GM12878 (cell line): ENCODE measurements at regions of chr15 and their contacts with region 1.

Region 1: DNA sequence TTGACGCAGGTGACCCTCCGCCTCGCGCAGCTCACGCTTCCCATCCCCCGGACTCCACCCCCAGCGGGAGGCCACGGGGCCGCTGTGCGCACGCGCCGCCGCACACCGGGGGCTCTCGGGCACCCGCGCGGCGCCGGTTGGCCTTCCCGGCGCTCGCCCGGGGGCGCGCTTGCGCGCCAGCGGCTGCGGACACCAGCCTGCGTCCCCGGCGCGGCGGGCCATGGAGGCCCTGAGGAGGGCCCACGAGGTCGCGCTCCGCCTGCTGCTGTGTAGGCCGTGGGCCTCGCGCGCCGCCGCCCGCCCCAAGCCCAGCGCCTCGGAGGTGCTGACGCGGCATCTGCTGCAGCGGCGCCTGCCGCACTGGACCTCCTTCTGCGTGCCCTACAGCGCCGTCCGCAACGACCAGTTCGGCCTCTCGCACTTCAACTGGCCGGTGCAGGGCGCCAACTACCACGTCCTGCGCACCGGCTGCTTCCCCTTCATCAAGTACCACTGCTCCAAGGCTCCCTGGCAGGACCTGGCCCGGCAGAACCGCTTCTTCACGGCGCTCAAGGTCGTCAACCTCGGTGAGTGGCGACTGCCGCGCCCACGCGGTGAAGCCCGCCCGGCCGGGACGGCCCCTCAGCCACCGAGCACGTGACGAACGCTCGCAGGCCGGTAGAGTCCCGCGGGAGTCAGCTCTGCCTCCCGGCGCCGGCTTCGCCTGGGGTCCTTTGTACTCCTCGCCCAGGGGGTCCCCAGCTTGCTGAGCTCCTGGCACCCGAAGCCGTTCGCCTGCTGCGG is at the start of gene C15orf61:
- DNase-seq: peak; percentile 76
- ATAC-seq: peak; percentile 84
- H3K4me3 ChIP-seq: peak within 1 kb of the TSS; percentile 93
- H3K27ac ChIP-seq: peak within 1 kb of the TSS; percentile 62
- H3K4me1 ChIP-seq: no peaks in the 10 kb centered on the region
- H3K27me3 ChIP-seq: no peaks in the 10 kb centered on the region
- CTCF ChIP-seq: peak in 2 of 3 experiments; percentile 0 to 7; a peak in 1 of 6 replicates
- EP300 ChIP-seq: 0 out of 4 replicates have a peak, but pooled peaks of 1 of the 2 experiments have one; percentile 10
- POLR2A ChIP-seq: peak; percentile 88
- RAD21 ChIP-seq: no peak
- polyA plus RNA-seq, gene C15orf61: 1.4 to 4.5 TPM

Region 2: DNA sequence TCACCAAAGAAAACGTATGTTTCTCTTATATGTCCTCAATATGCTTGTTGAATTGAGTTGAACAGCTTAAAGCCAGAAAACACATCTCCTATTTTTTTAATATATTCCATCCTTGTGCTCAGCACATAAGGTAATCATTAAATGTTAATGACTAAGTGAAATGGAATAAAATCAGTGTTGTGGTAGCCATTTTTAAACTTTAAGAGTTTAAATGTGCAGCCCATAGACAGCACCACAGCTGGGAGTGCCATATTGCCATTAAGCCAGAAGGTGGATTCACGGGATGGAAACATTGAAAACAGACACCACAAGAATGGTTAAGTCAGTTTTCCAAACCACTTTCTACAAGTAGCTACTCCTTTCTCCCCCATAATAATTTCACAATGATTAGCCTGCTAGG is 77.1 kb before region 1 on chr15:
- CTCF ChIA-PET with region 1: no interaction called
- POLR2A ChIA-PET with region 1: no interaction called
- RAD21 ChIA-PET with region 1: no interaction called
- SMC1A ChIA-PET with region 1: no interaction called
- in situ Hi-C with region 1: no loop called
- intact Hi-C with region 1: no loop called
- DNase-seq: no peak
- ATAC-seq: no peak
- H3K4me3 ChIP-seq: no peak overlapping the region
- H3K27ac ChIP-seq: no peak overlapping the region
- H3K4me1 ChIP-seq: no peaks in the 10 kb centered on the region
- H3K27me3 ChIP-seq: no peaks in the 10 kb centered on the region
- CTCF ChIP-seq: no peak
- EP300 ChIP-seq: no peak
- POLR2A ChIP-seq: no peak
- RAD21 ChIP-seq: no peak

Region 3: DNA sequence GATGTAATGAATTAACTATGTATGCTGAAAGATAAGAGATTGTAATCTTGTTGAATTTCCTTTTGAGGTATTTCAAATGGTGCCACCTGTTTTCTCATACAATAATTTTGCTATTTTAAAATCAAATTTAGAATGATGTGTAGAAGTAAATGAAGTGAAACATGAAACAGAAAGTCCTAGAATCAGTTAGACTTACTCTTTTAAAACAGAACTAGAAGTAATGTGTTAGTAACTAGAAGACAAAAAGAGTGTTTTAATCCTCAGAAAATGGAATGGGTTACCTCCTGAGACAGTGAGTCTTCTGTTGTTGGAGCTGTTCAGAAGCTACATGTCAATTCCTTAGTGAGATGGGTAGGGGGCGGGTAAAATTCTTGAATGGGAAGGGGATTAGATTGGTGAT is 13.1 kb after region 1 on chr15:
- CTCF ChIA-PET with region 1: interaction called, 5 read pairs
- POLR2A ChIA-PET with region 1: interaction called, 8 read pairs
- RAD21 ChIA-PET with region 1: interaction called, 13 read pairs
- SMC1A ChIA-PET with region 1: interaction called, 6 read pairs
- in situ Hi-C with region 1: no loop called
- intact Hi-C with region 1: loop called (anchors 2 kb)
- DNase-seq: no peak
- ATAC-seq: peak; percentile 66
- H3K4me3 ChIP-seq: peak overlapping the region; percentile 14; the same call in 1 of the 2 replicates
- H3K27ac ChIP-seq: peak overlapping the region; percentile 76
- H3K4me1 ChIP-seq: peaks cover 22% of the 10 kb centered on the region
- H3K27me3 ChIP-seq: no peaks in the 10 kb centered on the region
- CTCF ChIP-seq: no peak
- EP300 ChIP-seq: no peak
- POLR2A ChIP-seq: no peak
- RAD21 ChIP-seq: no peak